ENCODE measurements at regions of chr3 and their contacts with region 1.

Region 1: DNA sequence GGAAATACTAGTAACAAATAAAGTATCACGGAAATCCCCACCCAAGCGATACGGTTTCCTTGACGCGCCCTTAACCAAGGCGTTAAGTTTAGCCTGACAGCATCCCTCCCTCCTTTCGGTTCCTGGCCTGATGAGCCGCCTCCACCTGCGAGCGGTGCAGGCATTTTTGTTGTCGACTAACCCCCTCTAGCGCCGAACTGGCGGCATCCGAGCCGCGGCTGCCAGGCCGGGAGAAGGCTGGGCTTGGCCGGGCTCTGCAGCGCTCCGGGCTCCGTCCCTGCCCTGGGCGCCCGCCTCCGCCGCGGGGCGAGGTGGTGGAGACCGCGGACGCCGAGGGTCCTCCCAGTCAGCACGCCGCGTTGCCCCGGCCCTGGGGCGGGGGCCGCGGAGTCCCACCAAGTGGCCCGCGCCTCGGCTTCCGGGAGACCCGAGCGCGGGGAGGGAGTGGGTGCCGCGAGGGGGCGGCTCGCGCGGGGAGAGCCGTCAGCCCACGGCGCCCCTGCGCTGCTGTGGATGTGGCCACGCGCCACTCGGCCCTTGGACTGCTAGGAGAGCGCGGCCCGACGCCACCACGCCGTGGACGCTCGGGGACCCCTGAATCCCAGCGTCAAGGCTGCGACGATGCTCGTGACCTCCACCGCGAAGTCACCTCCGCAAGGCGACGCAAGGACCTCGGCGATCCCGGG is 1.1 kb upstream of the EPHA6 start:
- DNase-seq: peak; percentile 83 to 90
- H3K4me3 ChIP-seq: peak overlapping the region; percentile 67
- H3K4me3 Mint-ChIP-seq: peak overlapping the region; percentile 76
- H3K27ac Mint-ChIP-seq: no peak overlapping the region
- H3K4me1 ChIP-seq: no peaks in the 10 kb centered on the region
- H3K4me1 Mint-ChIP-seq: peaks cover 7% of the 10 kb centered on the region
- H3K27me3 ChIP-seq: no peaks in the 10 kb centered on the region
- H3K27me3 Mint-ChIP-seq: no peaks in the 10 kb centered on the region
- CTCF ChIP-seq: peak; percentile 63 to 74

Region 2: DNA sequence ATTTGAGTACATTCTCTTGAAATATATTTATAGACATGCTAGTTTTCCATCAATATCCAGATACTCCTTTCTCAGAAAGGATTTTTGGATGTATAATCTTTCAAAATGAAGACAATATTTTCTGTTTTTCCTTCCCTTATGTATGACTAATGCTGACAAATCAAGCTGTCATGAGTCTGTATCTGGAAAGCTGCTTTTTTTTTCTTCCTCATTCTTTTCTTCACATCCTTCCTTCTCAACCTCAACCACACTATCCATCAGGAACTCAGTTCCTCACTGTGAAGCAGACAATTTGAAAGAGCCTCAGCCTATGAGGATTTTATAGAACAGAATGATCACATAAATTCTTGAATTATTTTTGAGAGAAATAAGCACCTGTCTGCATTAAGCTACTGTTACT is 334.8 kb before region 1 on chr3:
- CTCF ChIA-PET with region 1: no interaction called
- POLR2A ChIA-PET with region 1: no interaction called
- intact Hi-C with region 1: loop called (anchors 10 kb)
- DNase-seq: no peak
- H3K4me3 ChIP-seq: no peak overlapping the region
- H3K4me3 Mint-ChIP-seq: no peak overlapping the region
- H3K27ac Mint-ChIP-seq: no peak overlapping the region
- H3K4me1 ChIP-seq: no peaks in the 10 kb centered on the region
- H3K4me1 Mint-ChIP-seq: no peaks in the 10 kb centered on the region
- H3K27me3 ChIP-seq: no peaks in the 10 kb centered on the region
- H3K27me3 Mint-ChIP-seq: no peaks in the 10 kb centered on the region
- CTCF ChIP-seq: no peak

Region 3: DNA sequence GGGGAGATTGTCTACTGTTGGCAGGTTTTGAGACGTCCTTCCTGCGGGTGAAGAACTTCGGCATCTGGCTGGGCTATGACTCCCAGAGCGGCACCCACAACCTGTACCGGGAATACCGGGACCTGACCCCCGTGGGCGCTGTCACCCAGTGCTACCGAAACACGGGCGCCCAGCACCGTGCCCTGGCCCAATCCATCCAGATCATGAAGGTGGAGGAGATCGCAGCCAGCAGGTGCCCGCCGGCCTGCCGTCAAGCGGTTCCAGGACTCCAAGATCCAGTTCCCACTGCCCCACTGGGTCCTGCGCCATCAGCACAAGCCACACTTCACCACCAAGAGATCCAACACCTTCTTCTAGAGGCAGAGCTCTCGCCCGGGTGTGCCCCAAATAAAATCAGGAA is 193.8 kb before region 1 on chr3:
- CTCF ChIA-PET with region 1: no interaction called
- POLR2A ChIA-PET with region 1: no interaction called
- intact Hi-C with region 1: loop called (anchors 5 kb)
- DNase-seq: no peak
- H3K4me3 ChIP-seq: no peak overlapping the region
- H3K4me3 Mint-ChIP-seq: no peak overlapping the region
- H3K27ac Mint-ChIP-seq: no peak overlapping the region
- H3K4me1 ChIP-seq: no peaks in the 10 kb centered on the region
- H3K4me1 Mint-ChIP-seq: no peaks in the 10 kb centered on the region
- H3K27me3 ChIP-seq: no peaks in the 10 kb centered on the region
- H3K27me3 Mint-ChIP-seq: no peaks in the 10 kb centered on the region
- CTCF ChIP-seq: no peak

Region 4: GRCh38 chr3:96677156-96677555 is 136.1 kb before region 1 on chr3:
- CTCF ChIA-PET with region 1: no interaction called
- POLR2A ChIA-PET with region 1: no interaction called
- intact Hi-C with region 1: loop called (anchors 2 kb)
- DNase-seq: peak in 1 of 2 experiments; percentile 11
- H3K4me3 ChIP-seq: no peak overlapping the region
- H3K4me3 Mint-ChIP-seq: no peak overlapping the region
- H3K27ac Mint-ChIP-seq: no peak overlapping the region
- H3K4me1 ChIP-seq: peaks cover 14% of the 10 kb centered on the region; the same call in 1 of the 2 replicates
- H3K4me1 Mint-ChIP-seq: no peaks in the 10 kb centered on the region
- H3K27me3 ChIP-seq: no peaks in the 10 kb centered on the region
- H3K27me3 Mint-ChIP-seq: peaks cover 3% of the 10 kb centered on the region
- CTCF ChIP-seq: no peak

Measured in Caco-2 (cell line).